ENCODE measurements at regions of chr6 and their contacts with region 1.

Region 1: GRCh38 chr6:156197513-156197912 is 579.7 kb upstream of the ARID1B start:
- DNase-seq: no peak
- ATAC-seq: no peak
- H3K4me3 ChIP-seq: no peak overlapping the region
- H3K27ac ChIP-seq: no peak overlapping the region
- H3K4me1 ChIP-seq: no peaks in the 10 kb centered on the region
- H3K27me3 ChIP-seq: no peaks in the 10 kb centered on the region
- CTCF ChIP-seq: no peak
- EP300 ChIP-seq: no peak
- POLR2A ChIP-seq: no peak
- RAD21 ChIP-seq: no peak

Region 2: DNA sequence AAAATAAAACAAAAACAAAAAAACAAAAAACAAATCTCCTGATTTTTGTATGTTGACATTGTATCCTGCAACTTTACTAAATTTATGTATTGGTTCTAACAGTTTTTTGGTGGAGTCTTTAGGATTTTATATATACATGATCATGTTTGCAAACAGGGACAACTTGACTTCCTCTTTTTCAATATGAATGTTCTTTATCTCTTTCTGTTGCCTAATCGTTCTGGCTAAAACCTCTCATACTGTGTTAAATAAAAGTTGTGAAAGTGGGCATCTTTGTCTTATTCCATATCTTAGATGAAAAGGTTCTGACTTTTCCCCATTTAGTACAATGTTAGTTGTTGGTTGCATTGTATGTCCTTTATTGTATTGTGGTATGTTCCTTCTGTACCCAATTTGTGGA is 480.1 kb before region 1 on chr6:
- CTCF ChIA-PET with region 1: no interaction called
- POLR2A ChIA-PET with region 1: no interaction called
- in situ Hi-C with region 1: no loop called
- intact Hi-C with region 1: no loop called
- DNase-seq: no peak
- ATAC-seq: no peak
- H3K4me3 ChIP-seq: no peak overlapping the region
- H3K27ac ChIP-seq: no peak overlapping the region
- H3K4me1 ChIP-seq: no peaks in the 10 kb centered on the region
- H3K27me3 ChIP-seq: no peaks in the 10 kb centered on the region
- CTCF ChIP-seq: no peak
- EP300 ChIP-seq: no peak
- POLR2A ChIP-seq: no peak
- RAD21 ChIP-seq: no peak

Region 3: DNA sequence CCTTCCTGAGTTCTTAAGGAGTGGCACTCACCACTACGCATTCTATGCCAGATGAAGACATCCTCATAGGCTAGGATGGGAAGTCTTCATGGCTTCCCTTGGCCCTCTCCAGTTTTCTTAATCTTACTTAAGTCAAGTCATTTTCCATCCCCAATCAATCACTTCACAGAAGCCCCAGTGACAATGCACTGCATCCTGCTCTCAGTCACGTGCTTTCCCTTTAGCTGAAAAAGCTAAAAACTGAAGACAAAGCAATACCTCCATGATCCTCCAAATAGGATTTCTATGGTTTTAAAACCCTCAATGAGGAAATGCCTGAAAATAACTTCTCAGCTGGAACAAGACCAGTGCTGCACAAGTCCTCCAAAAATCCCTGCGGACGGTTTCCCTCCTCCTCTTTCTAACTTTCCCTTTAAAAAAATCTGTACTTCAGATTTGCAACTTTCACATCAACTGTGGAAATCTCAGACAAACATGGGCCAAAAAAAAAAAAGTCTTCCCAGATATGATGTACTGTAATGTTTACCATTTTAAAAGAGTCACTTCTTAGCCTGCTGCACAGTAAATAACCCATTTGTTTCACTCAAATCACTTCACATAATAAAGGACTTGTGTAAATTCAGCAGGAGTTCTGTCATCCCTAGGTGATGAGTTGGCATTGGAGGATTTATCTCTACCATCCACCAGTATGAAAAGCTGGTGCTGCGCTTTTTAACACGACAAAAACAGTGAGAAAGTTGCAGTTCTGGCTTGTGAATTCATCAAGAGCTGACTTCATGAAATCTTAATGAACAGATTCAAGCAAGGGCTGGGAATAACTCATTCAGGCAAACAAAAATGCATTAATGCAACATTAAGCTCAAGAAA is 151.9 kb before region 1 on chr6:
- CTCF ChIA-PET with region 1: no interaction called
- POLR2A ChIA-PET with region 1: no interaction called
- in situ Hi-C with region 1: no loop called
- intact Hi-C with region 1: no loop called
- DNase-seq: no peak
- ATAC-seq: no peak
- H3K4me3 ChIP-seq: no peak overlapping the region
- H3K27ac ChIP-seq: no peak overlapping the region
- H3K4me1 ChIP-seq: no peaks in the 10 kb centered on the region
- H3K27me3 ChIP-seq: no peaks in the 10 kb centered on the region
- CTCF ChIP-seq: no peak
- EP300 ChIP-seq: no peak
- POLR2A ChIP-seq: no peak
- RAD21 ChIP-seq: no peak

Region 4: DNA sequence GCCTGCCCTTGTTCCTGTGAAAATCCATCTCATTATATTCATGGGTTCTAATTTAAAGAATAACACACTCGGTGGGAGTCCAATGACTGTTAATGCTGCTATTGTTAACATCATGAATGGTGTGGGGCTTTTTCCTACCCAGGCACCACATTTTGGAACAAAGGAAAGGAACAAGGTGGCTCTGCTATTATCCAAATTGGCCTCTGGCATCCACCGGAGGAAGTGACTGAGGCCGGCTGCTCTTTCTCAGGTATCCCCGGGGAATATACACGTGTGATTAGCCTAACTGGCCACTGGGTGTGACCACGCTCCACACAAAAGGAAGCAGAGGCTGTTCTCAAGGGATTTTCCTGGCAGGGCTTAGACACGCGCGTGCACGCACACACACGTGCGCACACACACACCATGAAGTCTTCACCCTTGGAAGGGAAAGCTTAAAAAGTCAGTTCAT is 21.5 kb before region 1 on chr6:
- CTCF ChIA-PET with region 1: no interaction called
- POLR2A ChIA-PET with region 1: no interaction called
- in situ Hi-C with region 1: no loop called
- intact Hi-C with region 1: loop called (anchors 1 kb)
- DNase-seq: no peak
- ATAC-seq: no peak
- H3K4me3 ChIP-seq: no peak overlapping the region
- H3K27ac ChIP-seq: no peak overlapping the region
- H3K4me1 ChIP-seq: no peaks in the 10 kb centered on the region
- H3K27me3 ChIP-seq: no peaks in the 10 kb centered on the region
- CTCF ChIP-seq: no peak
- EP300 ChIP-seq: no peak
- POLR2A ChIP-seq: no peak
- RAD21 ChIP-seq: no peak

Measured in K562 (cell line).